ENCODE measurements at regions of chr15 and their contacts with region 1.

Region 1: DNA sequence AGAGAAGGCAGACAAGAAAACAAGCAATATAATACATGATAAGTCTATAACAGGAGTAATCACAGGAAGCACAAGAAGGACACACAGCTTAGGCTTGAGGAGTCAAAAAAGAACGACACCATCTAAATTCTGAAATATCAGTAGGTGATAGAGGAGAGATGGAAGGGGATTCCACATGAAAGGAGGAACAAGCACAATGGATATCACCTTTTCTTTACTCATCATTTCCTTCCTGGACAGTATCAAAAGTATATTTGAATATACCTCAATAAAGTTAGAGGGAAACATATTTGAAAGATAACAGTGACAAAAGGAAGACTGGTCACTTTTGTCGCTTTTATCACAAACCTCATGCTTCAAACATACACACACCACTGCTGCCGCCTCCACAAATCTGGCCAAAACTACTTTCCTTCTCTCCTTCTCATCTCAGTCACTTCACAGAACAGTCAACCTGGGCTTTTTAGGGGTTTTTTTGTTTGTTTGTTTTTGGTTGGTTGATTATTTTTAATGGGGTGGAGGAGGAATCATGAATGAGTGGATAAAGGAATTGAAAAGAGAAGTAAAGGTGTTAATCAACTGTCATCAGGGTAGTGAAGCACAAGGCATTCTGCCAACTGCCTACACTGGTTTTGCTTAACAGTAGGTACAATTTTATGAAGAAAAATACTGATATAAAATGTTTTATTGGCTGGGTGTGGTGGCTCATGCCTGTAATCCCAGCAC is 18.5 kb downstream of the DENND4A start:
- DNase-seq: peak; percentile 44
- ATAC-seq: peak; percentile 62
- H3K4me3 Mint-ChIP-seq: no peak overlapping the region
- H3K27ac Mint-ChIP-seq: peak overlapping the region; percentile 48
- H3K4me1 Mint-ChIP-seq: peaks cover 41% of the 10 kb centered on the region
- H3K27me3 Mint-ChIP-seq: no peaks in the 10 kb centered on the region

Region 2: DNA sequence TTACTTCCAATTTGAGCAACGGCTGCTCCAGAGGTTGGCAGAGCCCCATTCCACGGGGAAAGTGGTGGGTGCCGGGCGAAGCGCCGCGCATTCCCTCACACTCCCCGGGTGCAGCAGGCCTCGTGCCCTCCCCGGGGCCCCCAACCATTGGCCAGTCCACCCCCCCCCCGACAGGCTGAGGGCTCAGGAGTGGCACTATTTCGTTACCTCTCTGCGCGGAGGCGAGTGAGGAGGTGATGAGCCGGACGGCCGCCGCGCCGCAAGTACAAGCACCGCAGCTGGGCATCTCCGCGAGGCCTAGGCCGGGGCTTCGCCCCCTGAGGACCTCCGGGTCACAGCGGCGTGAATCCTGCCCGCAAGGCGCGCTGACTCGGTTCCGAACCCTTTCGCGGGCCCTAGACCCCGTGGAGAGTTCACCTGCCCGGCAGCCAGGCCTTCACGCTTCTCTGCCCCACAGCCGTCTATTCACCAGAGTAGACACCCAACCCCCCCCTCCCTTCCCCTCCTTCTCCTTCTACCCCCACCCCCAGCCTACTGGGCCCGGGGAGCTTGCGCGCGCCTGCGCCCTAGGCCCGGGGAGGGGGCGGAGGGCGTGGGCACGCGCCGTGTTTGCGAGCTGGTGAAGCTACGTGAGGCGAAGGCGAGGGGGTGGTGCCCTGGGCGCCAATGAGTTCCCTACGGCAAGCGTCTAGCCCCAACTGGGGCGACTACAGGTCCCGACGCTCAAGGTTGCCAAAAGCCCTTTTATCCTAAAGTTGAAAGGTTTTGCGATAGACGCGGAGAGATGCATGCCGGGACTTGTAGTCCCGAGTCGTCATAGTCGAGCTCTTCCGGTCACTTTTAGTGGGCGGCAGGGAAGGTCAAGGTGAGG is 588.4 kb before region 1 on chr15 and contains the start of gene CLPX:
- CTCF ChIA-PET with region 1: no interaction called
- POLR2A ChIA-PET with region 1: no interaction called
- intact Hi-C with region 1: no loop called
- DNase-seq: peak; percentile 95
- ATAC-seq: peak; percentile 93
- H3K4me3 Mint-ChIP-seq: peak within 1 kb of the TSS; percentile 92
- H3K27ac Mint-ChIP-seq: peak within 1 kb of the TSS; percentile 89
- H3K4me1 Mint-ChIP-seq: peaks cover 28% of the 10 kb centered on the region
- H3K27me3 Mint-ChIP-seq: no peaks in the 10 kb centered on the region
- total RNA-seq, gene CLPX: 65.2 to 73.7 TPM

Region 3: DNA sequence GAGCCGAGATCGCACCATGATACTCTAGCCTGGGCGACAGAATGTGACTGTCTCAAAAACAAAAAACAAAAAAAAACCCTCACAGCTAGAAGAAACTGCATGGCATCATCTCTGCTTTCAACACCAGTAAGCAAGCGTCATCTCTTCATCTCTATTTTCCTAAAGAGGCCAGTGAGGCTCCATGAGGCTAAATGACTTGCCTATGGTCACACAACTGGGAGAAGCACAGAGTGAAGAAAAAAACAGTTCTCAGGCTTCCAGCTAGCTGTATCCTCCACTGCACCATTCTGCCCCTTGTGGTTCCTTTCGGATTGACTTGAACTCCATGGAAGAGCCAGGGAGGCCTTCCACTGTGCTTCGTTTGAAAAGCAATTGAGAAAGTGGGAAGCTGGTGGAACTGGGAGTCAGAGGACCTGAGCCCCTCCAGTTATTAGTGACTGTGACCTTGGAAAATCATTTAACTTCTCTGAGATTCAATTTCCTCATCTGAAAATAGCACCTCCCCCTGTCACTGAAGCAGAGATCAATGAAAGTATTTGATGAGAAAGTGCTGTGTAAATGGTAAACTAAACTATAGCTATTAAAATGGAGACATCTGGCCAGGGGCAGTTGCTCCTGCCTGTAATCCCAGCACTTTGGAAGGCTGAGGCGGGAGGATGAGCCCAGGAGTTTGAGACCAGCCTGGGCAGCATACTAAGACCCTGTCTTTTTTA is 50.6 kb after region 1 on chr15:
- CTCF ChIA-PET with region 1: interaction called, 7 read pairs
- POLR2A ChIA-PET with region 1: no interaction called
- intact Hi-C with region 1: loop called in 1 of 2 experiments (anchors 10 kb)
- DNase-seq: peak; percentile 38
- ATAC-seq: peak; percentile 24
- H3K4me3 Mint-ChIP-seq: no peak overlapping the region
- H3K27ac Mint-ChIP-seq: peak overlapping the region; percentile 2
- H3K4me1 Mint-ChIP-seq: peaks cover 67% of the 10 kb centered on the region
- H3K27me3 Mint-ChIP-seq: no peaks in the 10 kb centered on the region

Region 4: GRCh38 chr15:66008940-66009562 is 235.5 kb after region 1 on chr15:
- CTCF ChIA-PET with region 1: no interaction called
- POLR2A ChIA-PET with region 1: no interaction called
- intact Hi-C with region 1: no loop called
- DNase-seq: no peak
- ATAC-seq: no peak
- H3K4me3 Mint-ChIP-seq: no peak overlapping the region
- H3K27ac Mint-ChIP-seq: no peak overlapping the region
- H3K4me1 Mint-ChIP-seq: no peaks in the 10 kb centered on the region
- H3K27me3 Mint-ChIP-seq: peaks cover 9% of the 10 kb centered on the region